GM10248 (cell line): ENCODE measurements at regions of chr9 and their contacts with region 1.

Region 1: DNA sequence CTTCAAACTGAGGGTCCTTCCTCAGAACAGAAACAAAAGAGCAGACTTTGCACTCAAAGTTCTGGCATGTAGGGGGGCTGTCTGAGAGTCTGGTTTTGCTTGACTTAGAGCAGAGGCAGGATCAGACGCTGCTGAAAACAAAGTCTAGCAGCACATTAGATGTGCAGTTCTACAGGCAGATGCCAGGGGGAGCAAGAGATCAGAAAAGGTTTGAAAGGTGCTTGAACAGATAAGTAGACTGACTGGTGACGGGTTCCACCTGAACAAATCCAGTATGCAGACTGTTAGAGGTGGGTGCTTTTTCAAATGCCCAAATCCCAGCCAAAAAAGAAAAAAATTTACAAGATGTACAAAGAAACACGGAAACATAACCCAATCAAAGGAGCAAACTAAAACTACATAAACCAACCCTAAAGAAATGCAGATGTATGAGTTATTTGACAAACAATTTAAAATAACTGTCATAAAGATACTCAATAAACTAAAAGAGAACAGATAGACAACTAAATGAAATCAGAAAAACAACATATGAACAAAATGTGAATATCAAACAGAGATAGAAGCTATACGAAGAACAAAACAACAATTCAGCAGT is 194.7 kb upstream of the FREM1 start:
- DNase-seq: peak; percentile 32
- CTCF ChIP-seq: peak; percentile 73

Region 2: GRCh38 chr9:15116130-15116580 is 11.2 kb after region 1 on chr9:
- CTCF ChIA-PET with region 1: interaction called, 15 read pairs
- POLR2A ChIA-PET with region 1: no interaction called
- DNase-seq: no peak
- CTCF ChIP-seq: no peak

Region 3: GRCh38 chr9:15135164-15135792 is 30.4 kb after region 1 on chr9:
- CTCF ChIA-PET with region 1: interaction called, 42 read pairs
- POLR2A ChIA-PET with region 1: no interaction called
- DNase-seq: peak; percentile 53
- CTCF ChIP-seq: peak; percentile 74